GM12878 (cell line): ENCODE measurements at regions of chrX and their contacts with region 1.

Region 1: GRCh38 chrX:149280011-149280410 is 225.1 kb downstream of the IDS start:
- DNase-seq: no peak
- ATAC-seq: no peak
- H3K4me3 ChIP-seq: no peak overlapping the region
- H3K27ac ChIP-seq: no peak overlapping the region
- H3K4me1 ChIP-seq: no peaks in the 10 kb centered on the region
- H3K27me3 ChIP-seq: no peaks in the 10 kb centered on the region
- CTCF ChIP-seq: no peak
- EP300 ChIP-seq: no peak
- POLR2A ChIP-seq: no peak
- RAD21 ChIP-seq: no peak

Region 2: GRCh38 chrX:149267878-149268813 is 11.9 kb before region 1 on chrX:
- CTCF ChIA-PET with region 1: interaction called, 20 read pairs
- POLR2A ChIA-PET with region 1: interaction called, 4 read pairs
- RAD21 ChIA-PET with region 1: interaction called, 34 read pairs
- SMC1A ChIA-PET with region 1: interaction called, 50 read pairs
- in situ Hi-C with region 1: no loop called
- intact Hi-C with region 1: no loop called
- DNase-seq: peak; percentile 24
- ATAC-seq: peak; percentile 81
- H3K4me3 ChIP-seq: no peak overlapping the region
- H3K27ac ChIP-seq: no peak overlapping the region
- H3K4me1 ChIP-seq: no peaks in the 10 kb centered on the region
- H3K27me3 ChIP-seq: no peaks in the 10 kb centered on the region
- CTCF ChIP-seq: no peak
- EP300 ChIP-seq: no peak
- POLR2A ChIP-seq: no peak
- RAD21 ChIP-seq: no peak

Region 3: GRCh38 chrX:149799095-149799714 is 519.2 kb after region 1 on chrX:
- CTCF ChIA-PET with region 1: no interaction called
- POLR2A ChIA-PET with region 1: no interaction called
- RAD21 ChIA-PET with region 1: no interaction called
- SMC1A ChIA-PET with region 1: no interaction called
- in situ Hi-C with region 1: no loop called
- intact Hi-C with region 1: no loop called
- DNase-seq: peak; percentile 47
- ATAC-seq: peak; percentile 43
- H3K4me3 ChIP-seq: no peak overlapping the region
- H3K27ac ChIP-seq: peak overlapping the region; percentile 35; the same call in 1 of the 2 replicates
- H3K4me1 ChIP-seq: peaks cover 3% of the 10 kb centered on the region; the same call in 1 of the 2 replicates
- H3K27me3 ChIP-seq: no peaks in the 10 kb centered on the region
- CTCF ChIP-seq: no peak
- EP300 ChIP-seq: no peak
- POLR2A ChIP-seq: no peak
- RAD21 ChIP-seq: no peak